CD8-positive, alpha-beta T cell (primary cell): ENCODE measurements at regions of chr11 and their contacts with region 1.

Region 1: DNA sequence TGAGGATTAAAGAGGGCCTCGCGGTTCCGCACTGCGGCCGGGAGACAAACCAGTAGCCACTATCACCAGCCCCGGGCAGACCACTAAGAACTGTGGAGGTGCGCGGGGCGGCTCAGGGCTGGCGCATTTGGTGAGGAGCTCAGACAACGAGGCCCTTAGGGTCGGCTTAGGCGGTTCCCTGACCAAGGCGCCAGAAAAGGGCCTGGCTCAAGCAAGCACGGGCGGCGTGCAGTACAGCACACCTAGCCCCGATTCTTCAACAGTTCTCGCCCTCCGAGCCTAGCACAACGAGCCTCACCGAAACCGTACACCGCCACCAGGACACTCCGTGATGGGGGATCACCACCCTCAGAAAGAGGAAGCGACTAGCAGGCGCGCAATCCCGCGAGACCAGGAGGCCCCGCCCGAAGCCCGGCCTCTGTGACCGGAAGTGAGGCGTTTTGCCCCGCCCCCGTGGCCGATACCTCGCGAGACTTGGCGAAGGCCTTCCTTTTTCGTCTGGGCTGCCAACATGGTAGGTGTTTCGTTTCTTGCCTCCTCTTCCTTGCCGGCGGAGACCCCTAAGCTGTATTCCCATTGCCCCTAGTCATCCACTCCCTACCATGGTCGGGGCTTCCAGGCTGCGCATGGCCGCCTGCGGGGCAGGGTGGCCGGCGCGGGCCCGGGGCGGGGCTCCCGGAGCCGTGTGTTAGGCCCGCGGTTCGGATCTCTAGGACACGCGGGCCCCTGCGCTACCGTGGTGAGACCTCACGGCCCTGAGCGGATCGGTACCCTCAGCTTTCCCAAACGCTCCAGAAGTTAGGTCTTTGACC is at the starts of genes RPL27A and TRIM66:
- DNase-seq: peak; percentile 98 to 100 (median 99)
- ATAC-seq: peak; percentile 92
- H3K4me3 ChIP-seq: peak within 1 kb of the TSS; percentile 63 to 99
- H3K4me3 Mint-ChIP-seq: peak within 1 kb of the TSS; percentile 96
- H3K27ac ChIP-seq: peak within 1 kb of the TSS; percentile 82 to 92
- H3K27ac Mint-ChIP-seq: peak within 1 kb of the TSS; percentile 98
- H3K4me1 ChIP-seq: peaks cover 27% of the 10 kb centered on the region
- H3K4me1 Mint-ChIP-seq: peaks cover 48% of the 10 kb centered on the region
- H3K27me3 ChIP-seq: no peaks in the 10 kb centered on the region
- H3K27me3 Mint-ChIP-seq: no peaks in the 10 kb centered on the region
- CTCF ChIP-seq: no peak
- total RNA-seq, gene RPL27A: 1,595 to 1,676 TPM
- total RNA-seq, gene TRIM66: 8.6 to 9.1 TPM

Region 2: GRCh38 chr11:7787239-7787638 is 895.3 kb before region 1 on chr11:
- CTCF ChIA-PET with region 1: no interaction called
- POLR2A ChIA-PET with region 1: no interaction called
- intact Hi-C with region 1: no loop called
- DNase-seq: no peak
- ATAC-seq: no peak
- H3K4me3 ChIP-seq: no peak overlapping the region
- H3K4me3 Mint-ChIP-seq: no peak overlapping the region
- H3K27ac ChIP-seq: no peak overlapping the region
- H3K27ac Mint-ChIP-seq: no peak overlapping the region
- H3K4me1 ChIP-seq: no peaks in the 10 kb centered on the region
- H3K4me1 Mint-ChIP-seq: no peaks in the 10 kb centered on the region
- H3K27me3 ChIP-seq: no peaks in the 10 kb centered on the region
- H3K27me3 Mint-ChIP-seq: no peaks in the 10 kb centered on the region
- CTCF ChIP-seq: no peak

Region 3: GRCh38 chr11:8754241-8754640 is 71.7 kb after region 1 on chr11:
- CTCF ChIA-PET with region 1: no interaction called
- POLR2A ChIA-PET with region 1: no interaction called
- intact Hi-C with region 1: no loop called
- DNase-seq: no peak
- ATAC-seq: no peak
- H3K4me3 ChIP-seq: no peak overlapping the region
- H3K4me3 Mint-ChIP-seq: no peak overlapping the region
- H3K27ac ChIP-seq: no peak overlapping the region
- H3K27ac Mint-ChIP-seq: no peak overlapping the region
- H3K4me1 ChIP-seq: no peaks in the 10 kb centered on the region
- H3K4me1 Mint-ChIP-seq: no peaks in the 10 kb centered on the region
- H3K27me3 ChIP-seq: no peaks in the 10 kb centered on the region
- H3K27me3 Mint-ChIP-seq: peaks cover 12% of the 10 kb centered on the region
- CTCF ChIP-seq: no peak

Region 4: GRCh38 chr11:9003573-9004309 is 321.2 kb after region 1 on chr11 and contains the start of gene NRIP3:
- CTCF ChIA-PET with region 1: no interaction called
- POLR2A ChIA-PET with region 1: no interaction called
- intact Hi-C with region 1: loop called (anchors 5 kb)
- DNase-seq: peak; percentile 58 to 91 (median 82)
- ATAC-seq: peak; percentile 92
- H3K4me3 ChIP-seq: peak within 1 kb of the TSS; percentile 47 to 66
- H3K4me3 Mint-ChIP-seq: peak within 1 kb of the TSS; percentile 76
- H3K27ac ChIP-seq: no peak within 1 kb of the TSS
- H3K27ac Mint-ChIP-seq: peak within 1 kb of the TSS; percentile 24
- H3K4me1 ChIP-seq: peaks cover 10% of the 10 kb centered on the region
- H3K4me1 Mint-ChIP-seq: peaks cover 15% of the 10 kb centered on the region
- H3K27me3 ChIP-seq: peaks cover 7 to 24% of the 10 kb centered on the region in 2 experiments
- H3K27me3 Mint-ChIP-seq: peaks cover 32% of the 10 kb centered on the region
- CTCF ChIP-seq: no peak
- total RNA-seq, gene NRIP3: 8.8 to 10.1 TPM